ENCODE measurements at regions of chr22 and their contacts with region 1.

Region 1: GRCh38 chr22:24106385-24107381 is 74.6 kb upstream of the SUSD2 start:
- DNase-seq: peak in 1 of 10 donors; percentile 1
- H3K4me3 ChIP-seq: no peak overlapping the region
- H3K27ac ChIP-seq: peak overlapping the region in 57 of 59 donors; percentile 6 to 94 (median 75)
- H3K27me3 ChIP-seq: no peaks in the 10 kb centered on the region
- CTCF ChIP-seq: peak in 31 of 56 donors; percentile 11 to 51 (median 26)

Region 2: GRCh38 chr22:24156913-24157821 is 50.5 kb after region 1 on chr22:
- intact Hi-C with region 1: loop called in 1 of 2 experiments (anchors 5 kb)
- DNase-seq: peak in 9 of 10 donors; percentile 43 to 85 (median 58)
- H3K4me3 ChIP-seq: peak overlapping the region; percentile 39 to 87 (median 73)
- H3K27ac ChIP-seq: peak overlapping the region in 56 of 59 donors; percentile 16 to 94 (median 80)
- H3K27me3 ChIP-seq: no peaks in the 10 kb centered on the region
- CTCF ChIP-seq: peak in 55 of 56 donors; percentile 17 to 73 (median 59)

Region 3: DNA sequence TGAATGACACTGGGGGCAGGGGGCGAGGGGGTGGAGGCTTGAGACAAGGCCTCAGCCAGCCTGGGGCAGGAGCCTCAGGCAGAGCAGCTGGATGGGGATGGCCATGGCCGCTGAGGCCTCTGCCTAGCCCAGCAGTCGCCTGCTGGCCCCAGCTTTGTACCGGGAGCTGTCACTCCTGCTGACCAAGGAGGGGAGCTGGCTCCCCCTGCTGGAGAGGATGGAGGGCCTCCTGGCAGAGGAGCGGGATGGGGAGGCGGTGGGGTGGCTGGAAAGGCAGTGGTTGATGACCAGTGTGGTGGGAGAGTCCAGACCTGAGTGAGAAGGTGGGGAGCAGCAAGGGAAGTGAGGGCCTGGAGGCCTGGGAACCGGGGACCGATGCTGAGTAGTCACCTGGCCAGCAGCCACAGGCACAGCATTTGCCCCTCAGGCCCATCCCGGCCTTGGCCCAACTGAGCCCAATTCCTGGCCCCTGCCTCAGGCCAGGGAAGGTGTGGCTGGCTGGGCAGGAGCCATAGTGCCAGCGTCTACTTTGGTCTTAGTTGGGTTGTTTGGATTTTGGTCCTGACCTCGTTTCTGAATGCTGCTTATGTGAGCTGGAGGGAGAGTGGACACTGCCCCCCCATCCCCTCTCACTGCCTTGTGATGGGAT is 68.6 kb after region 1 on chr22:
- intact Hi-C with region 1: loop called in 1 of 2 experiments (anchors 5 kb)
- DNase-seq: peak; percentile 55 to 83 (median 73)
- H3K4me3 ChIP-seq: no peak overlapping the region
- H3K27ac ChIP-seq: peak overlapping the region in 51 of 59 donors; percentile 2 to 86 (median 64)
- H3K27me3 ChIP-seq: no peaks in the 10 kb centered on the region
- CTCF ChIP-seq: peak; percentile 30 to 89 (median 77)